Esophagus muscularis mucosa (tissue), 4 donors: ENCODE measurements at regions of chr2 and their contacts with region 1.

Region 1: DNA sequence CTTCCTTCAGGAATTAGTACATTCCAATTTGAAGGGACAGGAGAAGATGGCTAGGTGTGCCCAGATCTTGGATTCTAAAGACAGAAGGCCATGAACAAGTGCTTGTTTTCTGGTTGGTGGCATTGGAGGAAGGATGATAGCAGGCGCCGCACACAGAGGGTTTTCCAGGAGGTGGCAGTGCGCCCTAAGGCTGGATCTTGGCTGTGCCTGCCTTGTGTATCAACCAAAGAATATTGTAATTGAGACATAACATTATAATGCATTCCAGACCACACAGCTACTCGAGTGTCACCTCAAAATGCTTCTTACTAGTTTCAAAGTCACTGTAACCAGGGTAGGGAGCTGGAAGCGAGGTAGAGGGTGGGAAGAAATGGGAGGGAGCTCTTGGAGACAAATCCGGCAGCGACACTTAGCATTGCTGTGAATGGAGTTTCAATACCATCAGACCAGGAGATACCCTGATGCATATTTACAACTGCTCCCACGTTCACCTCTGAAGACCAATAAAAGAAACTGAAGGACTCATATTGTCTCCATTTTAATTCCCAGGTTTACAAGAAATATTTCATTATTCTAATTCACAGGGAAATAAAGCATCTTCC is 42.5 kb downstream of the CPO start:
- DNase-seq: peak; percentile 92
- H3K4me3 ChIP-seq: peak overlapping the region in 1 of 4 donors; percentile 18
- H3K27ac ChIP-seq: no peak overlapping the region
- H3K4me1 ChIP-seq: peaks cover 23 to 36% (median 29%) of the 10 kb centered on the region in 4 donors
- H3K27me3 ChIP-seq: no peaks in the 10 kb centered on the region
- CTCF ChIP-seq: peak; percentile 81 to 87 (median 85)
- EP300 ChIP-seq: no peak
- POLR2A ChIP-seq: no peak

Region 2: DNA sequence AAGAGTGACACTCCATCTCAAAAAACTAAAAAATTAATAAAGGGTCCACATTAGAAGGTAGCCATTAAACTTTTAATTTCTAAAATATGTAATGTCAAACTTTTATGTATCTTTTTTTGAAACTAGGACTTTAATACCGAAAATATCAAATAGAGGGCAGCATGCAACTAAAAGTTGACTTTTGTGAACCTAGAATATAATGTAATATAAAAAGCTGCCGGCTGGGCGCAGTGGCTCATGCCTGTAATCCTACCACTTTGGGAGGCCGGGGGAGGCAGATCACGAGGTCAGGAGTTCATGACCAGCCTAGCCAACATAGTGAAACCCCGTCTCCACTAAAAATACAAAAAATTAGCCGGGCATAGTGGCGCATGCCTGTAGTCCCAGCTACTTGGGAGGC is 958.7 kb before region 1 on chr2:
- intact Hi-C with region 1: no loop called
- DNase-seq: no peak
- H3K4me3 ChIP-seq: no peak overlapping the region
- H3K27ac ChIP-seq: no peak overlapping the region
- H3K4me1 ChIP-seq: no peaks in the 10 kb centered on the region
- H3K27me3 ChIP-seq: no peaks in the 10 kb centered on the region
- CTCF ChIP-seq: peak in 1 of 3 experiments; percentile 10
- EP300 ChIP-seq: no peak
- POLR2A ChIP-seq: no peak

Region 3: GRCh38 chr2:206800506-206801417 is 181.1 kb before region 1 on chr2:
- intact Hi-C with region 1: loop called (anchors 5 kb)
- DNase-seq: no peak
- H3K4me3 ChIP-seq: no peak overlapping the region
- H3K27ac ChIP-seq: peak overlapping the region in 2 of 4 donors; percentile 37 to 38
- H3K4me1 ChIP-seq: peaks cover 7 to 19% (median 14%) of the 10 kb centered on the region in 4 donors
- H3K27me3 ChIP-seq: no peaks in the 10 kb centered on the region
- CTCF ChIP-seq: peak; percentile 70 to 78 (median 75)
- EP300 ChIP-seq: no peak
- POLR2A ChIP-seq: no peak

Region 4: DNA sequence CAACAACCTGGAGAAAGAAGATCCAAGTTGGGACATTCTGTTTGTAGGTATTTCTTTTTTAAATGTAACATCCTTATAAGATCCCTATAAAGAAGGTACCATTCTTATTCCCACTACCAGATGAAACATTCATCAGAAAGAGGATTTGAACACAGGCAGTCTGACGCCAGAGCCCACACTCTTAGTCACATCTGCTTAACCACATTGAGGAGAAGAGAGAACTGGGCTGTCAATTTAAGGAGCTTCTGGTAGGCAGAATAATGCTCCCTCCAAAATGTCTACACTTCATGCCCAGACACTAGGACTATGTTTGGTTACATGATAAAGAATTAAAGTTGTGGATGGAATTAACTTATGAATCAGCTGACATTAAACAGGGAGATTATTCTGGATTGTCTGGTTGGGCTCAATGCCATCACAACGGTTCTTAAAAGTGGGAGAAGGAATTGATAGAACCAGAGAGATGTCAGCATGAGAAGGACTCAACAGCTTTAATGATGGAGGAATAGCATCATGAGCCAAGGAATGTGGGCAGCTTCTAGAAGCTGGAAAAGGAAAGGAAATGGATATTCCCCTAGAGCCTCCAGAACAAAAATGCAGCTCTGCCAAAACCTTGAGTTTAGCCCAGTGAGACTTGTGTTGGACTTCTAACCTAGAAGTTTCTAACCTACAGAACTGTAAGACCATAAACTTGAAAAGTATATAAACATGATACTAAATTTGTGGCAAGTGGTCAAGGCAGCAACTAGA is 101.7 kb after region 1 on chr2:
- intact Hi-C with region 1: no loop called
- DNase-seq: no peak
- H3K4me3 ChIP-seq: no peak overlapping the region
- H3K27ac ChIP-seq: peak overlapping the region; percentile 8 to 55 (median 34)
- H3K4me1 ChIP-seq: peaks cover 39 to 49% (median 41%) of the 10 kb centered on the region in 4 donors
- H3K27me3 ChIP-seq: no peaks in the 10 kb centered on the region
- CTCF ChIP-seq: no peak
- EP300 ChIP-seq: no peak
- POLR2A ChIP-seq: no peak

Region 5: DNA sequence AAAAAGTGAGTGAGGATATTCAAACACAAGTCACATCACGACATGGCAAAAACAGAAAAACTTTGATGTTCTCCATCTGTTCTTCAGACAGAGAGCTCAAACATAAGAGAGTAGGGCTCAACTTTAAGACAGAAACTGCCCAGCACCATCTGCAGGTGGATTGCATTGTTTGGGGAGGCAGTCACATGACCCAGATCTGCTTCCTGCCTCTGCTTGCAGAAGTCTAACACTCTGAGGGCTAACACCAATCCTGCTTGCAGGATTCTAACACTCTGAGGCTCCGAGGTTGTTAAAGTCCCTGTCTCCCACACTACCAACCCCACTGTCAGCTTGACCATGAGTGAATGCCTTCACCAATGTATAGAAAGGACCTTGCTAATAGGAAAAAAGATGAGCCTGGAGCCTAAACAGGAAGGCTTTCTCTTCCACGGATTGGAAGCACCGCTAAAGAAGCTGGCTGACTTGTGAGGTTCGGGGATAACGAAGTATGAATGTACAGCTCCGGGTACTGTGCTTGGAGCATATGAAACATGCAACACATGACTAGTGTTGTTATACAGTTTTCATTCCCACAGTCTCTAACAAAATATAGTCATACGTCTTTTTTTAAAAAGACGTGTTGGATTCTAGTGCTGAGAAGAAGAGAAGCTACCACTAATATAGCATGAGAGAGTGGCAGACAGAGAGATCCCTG is 371.3 kb after region 1 on chr2:
- intact Hi-C with region 1: loop called (anchors 10 kb)
- DNase-seq: no peak
- H3K4me3 ChIP-seq: no peak overlapping the region
- H3K27ac ChIP-seq: peak overlapping the region in 3 of 4 donors; percentile 4 to 59 (median 56)
- H3K4me1 ChIP-seq: peaks cover 0 to 12% (median 8%) of the 10 kb centered on the region in 4 donors
- H3K27me3 ChIP-seq: no peaks in the 10 kb centered on the region
- CTCF ChIP-seq: peak; percentile 36 to 39 (median 36)
- EP300 ChIP-seq: no peak
- POLR2A ChIP-seq: no peak

Region 6: GRCh38 chr2:207933396-207934065 is 951.7 kb after region 1 on chr2:
- intact Hi-C with region 1: no loop called
- DNase-seq: no peak
- H3K4me3 ChIP-seq: no peak overlapping the region
- H3K27ac ChIP-seq: peak overlapping the region in 1 of 4 donors; percentile 15
- H3K4me1 ChIP-seq: peaks cover 9 to 29% (median 14%) of the 10 kb centered on the region in 4 donors
- H3K27me3 ChIP-seq: no peaks in the 10 kb centered on the region
- CTCF ChIP-seq: no peak
- EP300 ChIP-seq: no peak
- POLR2A ChIP-seq: no peak